AG04450 (cell line): ENCODE measurements at regions of chr3 and their contacts with region 1.

Region 1: GRCh38 chr3:12891985-12892839 is 50.8 kb upstream of the RPL32 start:
- DNase-seq: peak; percentile 32
- H3K4me3 ChIP-seq: peak overlapping the region; percentile 44
- H3K27ac ChIP-seq: no peak overlapping the region
- H3K27me3 ChIP-seq: peaks cover 16% of the 10 kb centered on the region
- CTCF ChIP-seq: peak; percentile 94

Region 2: DNA sequence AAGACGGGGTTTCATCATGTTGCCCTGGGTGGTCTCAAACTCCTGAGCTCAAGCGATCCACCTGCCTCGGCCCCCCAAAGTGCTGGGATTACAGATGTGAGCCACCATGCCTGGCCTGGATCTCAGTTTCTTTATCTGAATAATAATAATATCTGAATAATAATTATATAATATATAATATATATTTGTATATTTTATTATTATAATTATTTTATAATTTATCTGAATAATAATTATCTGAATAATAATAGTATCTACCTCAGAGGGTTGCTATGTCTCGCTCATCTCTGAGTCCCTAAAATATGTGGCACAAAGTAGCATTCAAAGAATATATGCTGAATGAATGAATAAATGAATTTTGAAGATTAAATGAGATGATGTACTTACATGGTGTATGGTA is 177.9 kb before region 1 on chr3:
- CTCF ChIA-PET with region 1: no interaction called
- POLR2A ChIA-PET with region 1: no interaction called
- DNase-seq: no peak
- H3K4me3 ChIP-seq: no peak overlapping the region
- H3K27ac ChIP-seq: no peak overlapping the region
- H3K27me3 ChIP-seq: no peaks in the 10 kb centered on the region
- CTCF ChIP-seq: no peak

Region 3: DNA sequence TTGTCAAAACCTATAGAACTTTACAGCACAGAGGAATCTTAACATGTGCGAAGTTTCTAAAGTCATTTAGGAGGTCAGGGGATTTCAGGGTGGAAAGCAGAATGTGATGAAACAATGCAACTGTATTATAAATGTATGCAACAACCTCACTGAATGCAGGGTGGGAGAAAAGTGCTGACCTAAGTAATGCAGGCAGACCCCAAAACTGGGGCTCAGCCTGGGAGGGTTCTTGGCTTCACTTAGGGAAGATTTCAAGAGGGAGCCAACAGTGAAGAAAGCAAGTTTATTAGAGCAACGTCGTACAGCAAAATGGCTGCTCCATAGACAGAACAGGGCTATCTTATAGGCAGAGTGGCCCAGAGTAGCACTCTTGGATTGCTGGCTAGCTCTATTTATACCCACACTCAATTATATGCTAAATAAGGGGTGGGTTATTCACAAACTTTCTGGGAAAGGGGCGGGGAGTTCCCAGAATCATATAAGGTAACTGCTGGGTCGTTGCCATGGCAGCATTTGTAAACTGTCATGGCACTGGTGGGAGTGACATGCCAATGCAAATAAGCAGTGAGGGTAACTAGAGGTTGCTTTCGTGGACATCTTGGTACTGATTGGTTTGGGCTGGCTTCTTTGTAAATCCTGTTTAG is 109.9 kb before region 1 on chr3:
- CTCF ChIA-PET with region 1: interaction called, 13 read pairs
- POLR2A ChIA-PET with region 1: no interaction called
- DNase-seq: peak; percentile 53
- H3K4me3 ChIP-seq: no peak overlapping the region
- H3K27ac ChIP-seq: no peak overlapping the region
- H3K27me3 ChIP-seq: peaks cover 7% of the 10 kb centered on the region
- CTCF ChIP-seq: no peak

Region 4: DNA sequence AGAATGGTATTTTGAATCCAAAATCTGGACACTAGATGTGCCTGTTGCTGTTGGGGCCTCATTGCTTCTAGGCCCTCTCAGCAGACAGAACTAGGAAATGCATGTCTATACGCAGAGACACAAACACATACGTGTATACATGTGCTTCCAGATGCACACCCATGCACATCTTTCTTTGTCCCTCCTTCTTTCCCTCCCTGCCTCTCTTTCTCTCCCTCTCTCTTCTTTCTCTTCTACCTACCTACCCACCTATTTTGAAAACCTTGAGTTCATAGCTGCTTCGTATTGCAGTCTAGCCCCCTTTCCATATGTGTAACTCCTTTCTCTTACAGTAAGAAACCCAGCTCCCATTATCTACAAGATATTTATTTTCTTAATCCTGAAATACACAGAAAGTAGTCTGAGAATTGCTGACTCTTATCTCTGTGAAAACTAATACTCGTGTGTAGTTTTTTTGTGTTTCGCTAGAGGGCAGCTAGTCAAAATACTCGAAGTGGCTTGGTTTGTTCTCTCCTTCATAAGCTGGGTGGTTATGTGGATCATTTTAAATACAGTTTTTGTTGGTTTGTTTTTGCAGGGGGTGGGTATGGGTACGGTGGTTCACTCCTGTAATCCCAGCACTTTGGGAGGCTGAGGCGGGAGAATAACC is 69.4 kb before region 1 on chr3:
- CTCF ChIA-PET with region 1: interaction called, 14 read pairs
- POLR2A ChIA-PET with region 1: no interaction called
- DNase-seq: no peak
- H3K4me3 ChIP-seq: no peak overlapping the region
- H3K27ac ChIP-seq: no peak overlapping the region
- H3K27me3 ChIP-seq: no peaks in the 10 kb centered on the region
- CTCF ChIP-seq: peak; percentile 37

Region 5: GRCh38 chr3:12868039-12869034 is 23.9 kb before region 1 on chr3:
- CTCF ChIA-PET with region 1: interaction called, 24 read pairs
- POLR2A ChIA-PET with region 1: no interaction called
- DNase-seq: peak; percentile 61
- H3K4me3 ChIP-seq: 0 out of 2 replicates have a peak overlapping the region, but pooled peaks have one; percentile 13
- H3K27ac ChIP-seq: no peak overlapping the region
- H3K27me3 ChIP-seq: peaks cover 42% of the 10 kb centered on the region
- CTCF ChIP-seq: peak; percentile 95

Region 6: DNA sequence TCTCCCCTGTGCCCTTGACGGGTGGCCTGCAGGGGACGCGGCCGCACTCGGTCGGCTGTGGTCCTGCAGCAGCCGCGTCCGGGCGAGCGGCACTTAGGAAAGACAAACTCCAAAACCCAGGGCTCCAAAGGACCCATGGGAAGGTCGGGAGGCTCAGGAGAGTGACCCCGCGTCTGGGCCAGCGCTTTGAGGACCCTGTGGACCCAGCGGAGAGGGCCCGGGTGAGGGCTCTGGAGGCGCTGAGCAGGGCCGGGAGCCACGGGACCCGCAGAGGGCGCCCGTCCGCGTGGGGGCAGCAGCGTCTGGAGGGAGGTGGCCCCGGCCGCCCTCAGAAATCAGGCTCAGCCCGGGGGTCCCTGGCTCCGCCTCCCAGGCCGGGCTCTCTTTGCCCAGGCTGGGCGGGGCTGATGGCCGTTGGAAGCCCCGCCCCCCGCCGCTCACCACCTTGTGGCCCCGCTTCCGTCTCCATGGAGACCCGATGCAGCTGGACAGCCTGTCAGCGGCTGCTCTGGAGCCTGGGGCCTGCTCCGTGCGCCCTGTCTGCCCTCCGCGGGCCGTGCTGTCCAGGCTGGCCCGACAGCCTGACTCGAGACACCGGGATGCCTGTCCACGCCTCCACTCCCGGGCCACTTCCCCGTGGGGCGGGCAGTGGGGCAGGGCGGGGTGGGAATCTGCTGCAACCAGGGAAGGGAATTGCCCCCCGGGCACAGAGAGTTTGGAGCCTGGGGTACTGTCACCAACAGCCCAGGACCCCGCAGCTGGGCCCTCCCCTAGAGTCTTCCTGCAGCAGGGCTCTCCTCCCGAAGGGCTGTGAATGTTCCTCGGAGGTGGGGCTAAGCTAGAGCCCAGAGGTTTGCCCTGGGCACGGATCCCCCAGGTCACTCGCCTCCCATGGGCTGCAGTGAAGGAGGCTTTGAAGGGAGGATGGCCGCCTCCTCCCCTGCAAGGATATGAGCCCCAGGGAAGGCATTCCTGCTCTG is 16.1 kb before region 1 on chr3:
- CTCF ChIA-PET with region 1: interaction called, 33 read pairs
- POLR2A ChIA-PET with region 1: no interaction called
- DNase-seq: no peak
- H3K4me3 ChIP-seq: peak overlapping the region; percentile 39
- H3K27ac ChIP-seq: no peak overlapping the region
- H3K27me3 ChIP-seq: peaks cover 16% of the 10 kb centered on the region
- CTCF ChIP-seq: 0 out of 2 replicates have a peak, but pooled peaks have one; percentile 10